ENCODE measurements at regions of chr2 and their contacts with region 1.

Region 1: GRCh38 chr2:45993476-45993991 is 303.7 kb upstream of the EPAS1 start:
- DNase-seq: peak; percentile 60
- ATAC-seq: peak; percentile 58 to 75

Region 2: DNA sequence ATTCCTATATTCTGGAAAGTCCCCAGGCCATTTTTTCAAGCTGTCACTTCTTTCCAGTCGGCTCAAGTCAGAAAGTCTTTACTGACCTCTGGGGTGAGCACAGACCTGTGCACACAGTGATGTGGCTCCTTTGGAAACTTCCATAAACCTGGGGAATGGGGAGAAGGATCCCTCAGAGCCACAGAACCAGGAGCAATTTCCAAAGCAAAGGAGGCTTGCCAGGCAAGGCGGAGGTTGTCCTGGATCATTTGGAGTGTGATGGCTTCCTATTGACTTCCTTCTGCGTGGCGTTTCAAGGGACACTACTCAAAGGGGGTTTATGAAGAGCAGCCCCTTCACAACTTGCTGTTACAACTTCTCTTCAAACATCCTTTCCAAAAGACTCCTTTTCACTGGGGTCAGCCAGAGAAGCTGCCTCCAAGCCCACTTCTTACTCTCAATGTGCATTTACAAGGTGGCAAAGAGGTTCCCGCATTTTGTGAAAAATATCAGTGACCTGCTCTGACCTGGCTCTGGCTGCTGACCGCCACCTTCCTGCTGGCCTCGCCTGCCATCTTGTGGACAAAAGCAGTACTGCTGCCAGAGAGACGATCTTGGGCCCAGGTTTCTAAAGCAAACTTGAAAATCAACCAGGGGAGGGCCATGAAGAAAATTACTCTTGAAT is 467.6 kb after region 1 on chr2:
- intact Hi-C with region 1: loop called in 1 of 2 experiments (anchors 1 kb)
- DNase-seq: peak; percentile 79
- ATAC-seq: peak; percentile 67 to 69